GM13976 (cell line): ENCODE measurements at regions of chr2 and their contacts with region 1.

Region 1: GRCh38 chr2:96131152-96131812 is 7.0 kb downstream of the ASTL start:
- DNase-seq: no peak
- CTCF ChIP-seq: no peak

Region 2: DNA sequence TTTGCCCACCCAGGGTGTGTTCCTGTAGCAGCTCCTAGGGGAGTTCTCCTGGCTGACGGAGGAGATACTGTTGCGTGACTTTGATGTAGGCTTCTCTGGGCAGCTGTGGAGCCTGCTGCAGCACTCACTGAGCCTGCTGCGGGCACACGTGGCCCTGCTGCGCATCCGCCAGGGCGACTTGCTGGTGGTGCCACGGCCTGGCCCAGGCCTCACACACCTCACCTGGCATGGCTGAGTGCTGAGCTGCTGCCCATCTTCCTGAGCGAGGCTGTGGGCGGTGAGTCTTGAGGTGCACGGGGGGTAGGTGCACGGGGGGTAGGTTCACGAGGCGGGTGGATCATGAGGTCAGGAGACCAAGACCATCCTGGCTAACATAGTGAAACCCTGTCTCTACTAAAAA is 331.4 kb before region 1 on chr2:
- in situ Hi-C with region 1: no loop called
- DNase-seq: no peak
- CTCF ChIP-seq: no peak

Region 3: GRCh38 chr2:96260404-96261260 is 129.3 kb after region 1 on chr2:
- in situ Hi-C with region 1: loop called (anchors 5 kb)
- DNase-seq: peak; percentile 77
- CTCF ChIP-seq: peak; percentile 57

Region 4: DNA sequence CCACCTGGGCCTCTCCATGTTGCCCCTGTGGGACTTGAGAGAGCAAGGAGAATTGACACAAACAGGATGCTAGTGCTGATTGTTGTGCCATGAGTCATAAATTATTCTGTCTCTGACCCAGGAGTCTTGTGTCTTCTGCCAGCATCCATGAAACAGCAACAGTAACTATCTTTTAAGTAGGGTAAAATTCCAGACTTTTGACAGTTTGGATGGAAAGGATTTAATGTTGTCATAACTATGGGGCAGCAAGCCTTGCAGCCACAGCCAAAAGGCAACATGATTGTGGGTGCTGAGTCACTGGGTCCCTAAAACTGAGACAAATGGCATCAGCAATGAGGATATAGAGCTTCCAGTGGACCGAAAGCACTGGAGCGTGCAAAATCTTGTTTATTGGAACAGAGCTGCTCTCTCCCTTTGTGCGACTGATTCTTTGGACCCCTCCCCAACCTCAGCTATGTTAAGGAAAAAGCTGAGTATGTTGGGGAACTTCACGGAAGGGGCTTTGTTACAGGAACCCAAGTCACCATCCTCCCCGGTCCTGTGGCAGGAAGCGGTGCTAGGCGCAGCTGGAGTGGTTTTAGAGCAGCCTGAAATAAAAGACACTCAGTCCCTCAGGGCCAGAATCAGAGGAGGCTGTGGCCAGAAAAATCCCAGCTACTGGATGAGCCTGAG is 184.3 kb after region 1 on chr2:
- in situ Hi-C with region 1: no loop called
- DNase-seq: no peak
- CTCF ChIP-seq: no peak

Region 5: DNA sequence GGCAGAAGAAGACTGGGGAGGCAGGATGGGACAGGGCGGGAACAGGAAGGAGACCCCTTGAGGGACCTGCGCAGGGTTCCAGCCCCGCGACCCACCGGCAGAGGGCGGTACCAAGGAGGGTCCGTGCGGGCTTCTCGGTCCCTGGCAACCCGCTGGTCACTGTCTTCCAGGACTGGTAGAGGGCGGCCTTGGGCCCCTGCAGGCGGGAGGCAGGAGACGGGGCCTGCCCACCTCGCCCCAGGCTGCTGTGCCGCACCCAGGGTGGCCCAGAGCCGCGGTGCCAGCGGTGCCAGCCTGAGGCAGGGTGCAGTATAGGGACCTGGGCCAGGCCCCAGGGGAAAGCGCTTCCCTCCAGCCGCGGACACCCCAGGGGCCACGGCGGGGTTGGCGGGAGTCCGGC is 339.4 kb after region 1 on chr2:
- in situ Hi-C with region 1: no loop called
- DNase-seq: peak; percentile 82
- CTCF ChIP-seq: peak; percentile 62

Region 6: DNA sequence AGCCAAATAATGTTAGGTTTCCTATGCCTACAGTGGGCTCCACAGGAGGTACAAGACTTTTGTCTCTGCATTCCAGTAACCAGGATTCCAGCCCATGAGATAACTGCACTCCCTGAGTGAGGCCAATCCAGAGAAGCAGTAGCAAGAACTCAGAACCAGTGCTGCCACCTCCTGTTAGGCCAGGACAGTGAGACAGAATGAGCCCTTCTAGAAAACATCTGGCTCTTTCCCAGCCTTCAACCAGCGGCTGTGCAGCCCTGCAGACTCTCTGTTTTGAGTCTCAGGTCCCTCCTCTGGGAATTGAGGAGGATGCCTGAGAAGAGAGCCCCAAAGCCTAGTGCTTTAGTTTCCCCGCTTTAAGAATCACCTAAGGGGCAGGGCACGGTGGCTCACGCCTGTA is 449.5 kb after region 1 on chr2:
- in situ Hi-C with region 1: no loop called
- DNase-seq: no peak
- CTCF ChIP-seq: no peak